ENCODE measurements at regions of chr7 and their contacts with region 1.

Region 1: DNA sequence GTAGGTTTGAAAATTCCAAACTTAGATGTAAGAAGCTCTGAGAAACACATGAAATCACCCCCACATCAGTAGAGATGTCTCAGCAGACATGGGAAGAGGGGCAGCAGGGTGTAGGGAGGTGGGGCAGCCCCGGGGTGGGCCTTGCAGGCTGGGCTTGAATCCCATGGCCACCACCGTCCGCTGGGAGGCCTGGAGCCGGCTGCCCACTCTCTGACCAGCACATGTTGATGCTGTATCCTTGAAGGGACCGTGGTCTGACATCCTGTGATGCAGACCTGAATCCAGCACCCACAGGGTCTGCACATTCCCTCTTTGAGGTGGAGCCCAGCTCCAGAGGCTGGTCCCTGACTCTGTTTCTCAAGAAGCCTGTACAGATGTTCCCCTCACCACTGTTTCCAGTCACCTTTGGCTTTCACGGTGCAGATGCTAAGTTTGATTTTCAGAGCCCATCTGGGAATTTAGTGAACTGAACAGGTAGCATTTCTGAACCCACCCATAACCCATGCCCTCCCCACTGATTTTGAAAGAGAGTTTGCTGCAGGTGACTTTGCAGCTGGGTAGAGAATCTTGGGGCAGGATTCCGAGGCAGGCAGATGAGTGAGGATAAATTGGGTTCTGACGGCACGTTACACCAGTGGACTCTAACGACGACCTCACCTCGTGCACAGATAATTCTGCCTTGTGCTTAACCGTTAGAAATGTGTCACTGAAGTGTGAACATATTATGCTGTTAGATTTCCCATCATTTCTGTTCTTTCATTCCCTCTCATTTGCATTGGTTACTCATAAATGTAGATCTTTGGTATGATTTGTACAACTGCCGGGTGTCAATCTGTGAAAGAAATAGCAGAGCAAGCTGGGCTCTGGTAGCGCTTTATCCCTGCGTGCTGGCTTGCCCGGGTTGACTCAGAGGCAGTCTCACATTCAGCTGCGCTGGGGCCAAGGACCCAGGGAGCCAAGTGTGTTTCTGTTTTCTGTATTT is 45.7 kb downstream of the IKZF1 start:
- DNase-seq: peak; percentile 93
- ATAC-seq: peak; percentile 71
- H3K4me3 Mint-ChIP-seq: peak overlapping the region; percentile 61
- H3K27ac Mint-ChIP-seq: peak overlapping the region; percentile 100
- H3K4me1 Mint-ChIP-seq: peaks cover 97% of the 10 kb centered on the region
- H3K27me3 Mint-ChIP-seq: no peaks in the 10 kb centered on the region

Region 2: DNA sequence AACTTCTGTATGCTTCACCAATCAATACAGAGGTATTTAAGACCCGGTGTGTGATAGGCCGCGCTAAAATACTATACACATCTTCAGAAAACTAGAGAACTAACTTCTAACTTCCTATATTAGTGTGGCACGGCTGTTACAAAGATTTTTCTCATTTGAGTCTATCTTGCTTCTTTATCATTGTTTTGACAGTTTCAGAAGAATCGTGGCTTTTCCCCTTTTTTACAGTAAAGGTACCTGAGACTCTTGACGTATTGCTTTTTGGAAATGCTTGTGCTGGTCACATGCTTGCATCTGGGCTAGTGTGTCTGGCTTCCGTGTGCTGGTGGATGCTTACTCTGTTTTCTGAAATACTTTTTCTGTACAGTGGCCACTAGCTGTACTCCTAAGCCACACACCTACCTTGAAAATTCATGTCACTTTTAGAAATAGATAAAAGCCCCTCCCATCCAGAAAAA is 33.0 kb before region 1 on chr7:
- CTCF ChIA-PET with region 1: interaction called, 17 read pairs
- POLR2A ChIA-PET with region 1: interaction called, 43 read pairs
- intact Hi-C with region 1: loop called (anchors 1 kb)
- DNase-seq: peak; percentile 73
- ATAC-seq: peak; percentile 82
- H3K4me3 Mint-ChIP-seq: peak overlapping the region; percentile 95
- H3K27ac Mint-ChIP-seq: peak overlapping the region; percentile 100
- H3K4me1 Mint-ChIP-seq: peaks cover 93% of the 10 kb centered on the region
- H3K27me3 Mint-ChIP-seq: no peaks in the 10 kb centered on the region

Region 3: DNA sequence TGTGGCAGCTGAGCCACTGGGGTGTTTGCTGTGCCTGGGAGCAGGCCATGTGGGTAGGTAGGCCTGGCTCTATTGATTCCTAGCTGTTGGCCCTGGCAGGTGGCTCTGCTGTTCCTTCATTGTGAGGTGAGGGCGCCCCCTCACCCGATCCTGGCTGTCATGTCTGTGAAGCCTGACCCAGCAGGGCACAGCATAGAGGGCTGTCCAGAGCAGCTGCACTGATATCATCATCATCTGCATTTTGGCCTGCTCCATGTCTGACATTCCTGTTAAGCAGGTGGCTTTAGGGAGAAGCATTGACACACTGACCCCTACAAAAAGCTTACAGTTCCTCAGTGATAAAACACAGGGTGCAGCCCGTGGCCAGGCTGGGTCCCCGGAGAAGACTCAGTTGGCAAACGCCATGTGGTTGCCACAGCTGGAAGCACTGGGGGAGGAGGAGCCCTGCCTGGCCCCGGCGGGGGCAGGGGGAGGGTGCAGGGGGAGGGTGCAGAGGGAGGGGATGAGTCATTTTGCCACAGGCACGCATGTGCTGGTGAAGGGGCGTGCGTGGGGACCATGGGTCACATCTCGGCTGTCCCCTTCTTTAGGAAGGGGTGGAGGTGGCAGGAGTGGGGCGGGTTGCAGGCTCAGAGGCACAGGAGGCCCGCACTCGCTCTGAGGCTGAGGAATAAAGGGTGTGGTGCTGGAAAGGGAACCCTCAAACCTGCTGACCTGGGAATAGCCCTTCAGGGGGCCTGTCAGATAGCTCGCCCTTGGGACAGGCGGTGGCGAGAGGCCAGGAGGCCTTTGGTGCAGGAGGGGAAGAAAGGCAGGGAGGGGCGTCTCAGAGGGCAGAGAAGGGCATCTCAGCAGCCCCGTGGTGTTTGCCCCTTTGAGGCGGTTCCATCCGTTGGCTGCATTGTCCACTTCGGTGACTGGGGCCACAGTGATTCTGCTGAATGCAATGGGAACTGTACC is 14.2 kb before region 1 on chr7:
- CTCF ChIA-PET with region 1: interaction called, 18 read pairs
- POLR2A ChIA-PET with region 1: interaction called, 20 read pairs
- intact Hi-C with region 1: loop called (anchors 1 kb)
- DNase-seq: peak; percentile 93
- ATAC-seq: peak; percentile 34
- H3K4me3 Mint-ChIP-seq: no peak overlapping the region
- H3K27ac Mint-ChIP-seq: no peak overlapping the region
- H3K4me1 Mint-ChIP-seq: peaks cover 2% of the 10 kb centered on the region
- H3K27me3 Mint-ChIP-seq: no peaks in the 10 kb centered on the region

Region 4: GRCh38 chr7:50359995-50360925 is 10.0 kb after region 1 on chr7:
- CTCF ChIA-PET with region 1: interaction called, 214 read pairs
- POLR2A ChIA-PET with region 1: interaction called, 67 read pairs
- intact Hi-C with region 1: loop called (anchors 1 kb)
- DNase-seq: peak; percentile 89
- ATAC-seq: peak; percentile 77
- H3K4me3 Mint-ChIP-seq: peak overlapping the region; percentile 67
- H3K27ac Mint-ChIP-seq: peak overlapping the region; percentile 99
- H3K4me1 Mint-ChIP-seq: peaks cover 97% of the 10 kb centered on the region
- H3K27me3 Mint-ChIP-seq: no peaks in the 10 kb centered on the region

Region 5: DNA sequence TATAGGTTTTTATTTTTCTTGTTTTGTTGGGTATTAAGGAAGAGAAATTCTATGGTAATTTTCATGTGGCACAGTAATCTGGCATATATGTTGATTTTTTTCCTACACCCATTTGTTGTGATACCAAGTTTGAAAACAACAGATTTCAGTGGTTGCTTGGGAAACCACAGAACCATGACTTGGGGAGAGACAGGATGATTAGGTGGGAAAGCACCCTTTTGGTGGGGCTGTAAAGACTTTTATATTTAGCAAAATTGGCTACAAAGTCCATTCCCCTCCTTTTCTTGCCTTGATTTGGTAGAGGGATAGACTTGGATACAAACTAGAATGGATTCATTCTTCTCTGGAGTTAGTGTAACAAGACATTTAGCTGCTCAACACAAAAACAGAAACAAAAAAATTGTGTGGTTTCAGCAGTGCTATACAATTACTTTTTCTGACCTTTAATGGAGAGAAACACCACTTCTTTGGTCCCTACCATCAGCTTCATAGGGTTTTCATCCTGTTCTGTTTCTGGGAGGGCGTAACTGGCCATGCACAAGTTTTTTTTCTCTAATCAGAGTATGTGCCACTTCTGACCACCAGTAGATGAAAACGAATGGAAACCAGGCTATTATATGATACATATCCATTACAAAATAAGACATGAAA is 47.2 kb after region 1 on chr7:
- CTCF ChIA-PET with region 1: no interaction called
- POLR2A ChIA-PET with region 1: interaction called, 4 read pairs
- intact Hi-C with region 1: loop called in 1 of 2 experiments (anchors 1 kb)
- DNase-seq: peak; percentile 63
- ATAC-seq: peak; percentile 12
- H3K4me3 Mint-ChIP-seq: peak overlapping the region; percentile 26
- H3K27ac Mint-ChIP-seq: peak overlapping the region; percentile 82
- H3K4me1 Mint-ChIP-seq: peaks cover 80% of the 10 kb centered on the region
- H3K27me3 Mint-ChIP-seq: no peaks in the 10 kb centered on the region